Transverse colon (tissue), 4 donors: ENCODE measurements at regions of chr2 and their contacts with region 1.

Region 1: GRCh38 chr2:80073134-80073561 is 231.4 kb downstream of the LRRTM1 start:
- DNase-seq: peak; percentile 27
- H3K4me3 ChIP-seq: no peak overlapping the region
- H3K27ac ChIP-seq: no peak overlapping the region
- H3K4me1 ChIP-seq: no peaks in the 10 kb centered on the region
- H3K27me3 ChIP-seq: no peaks in the 10 kb centered on the region
- CTCF ChIP-seq: peak; percentile 58 to 67 (median 65)
- EP300 ChIP-seq: no peak
- POLR2A ChIP-seq: no peak

Region 2: DNA sequence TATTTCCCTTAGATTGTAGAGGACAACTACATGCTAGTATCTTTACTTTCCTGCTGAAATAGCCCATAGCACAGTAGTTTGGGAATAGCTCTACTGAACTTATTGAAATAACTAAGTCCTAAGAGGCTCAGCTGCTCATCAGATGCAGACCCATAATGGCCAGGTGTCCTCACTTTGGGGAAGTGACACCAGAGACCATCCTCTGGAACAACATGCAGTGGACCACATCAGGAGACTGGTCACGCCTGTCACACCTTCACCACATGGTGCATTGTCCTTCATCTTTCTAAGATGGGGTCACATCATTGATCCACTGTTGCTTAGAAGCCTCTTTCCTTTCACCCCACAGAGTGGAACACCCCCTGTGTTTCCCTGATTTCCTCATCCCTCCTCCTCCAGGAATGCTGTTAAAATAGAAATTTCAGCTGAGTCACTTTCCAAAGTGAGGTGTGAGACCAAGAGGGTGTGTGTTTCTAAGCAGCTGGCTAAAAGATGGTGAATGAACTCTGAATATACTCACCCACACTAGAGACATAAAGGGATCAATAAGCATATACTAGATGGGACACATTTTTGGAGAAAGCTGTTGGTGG is 446.6 kb after region 1 on chr2:
- in situ Hi-C with region 1: loop called in 1 of 4 experiments (anchors 25 kb)
- intact Hi-C with region 1: no loop called
- DNase-seq: no peak
- H3K4me3 ChIP-seq: no peak overlapping the region
- H3K27ac ChIP-seq: no peak overlapping the region
- H3K4me1 ChIP-seq: no peaks in the 10 kb centered on the region
- H3K27me3 ChIP-seq: no peaks in the 10 kb centered on the region
- CTCF ChIP-seq: no peak
- EP300 ChIP-seq: no peak
- POLR2A ChIP-seq: no peak